Tibial artery (tissue), 4 donors: ENCODE measurements at regions of chr19 and their contacts with region 1.

Region 1: GRCh38 chr19:16382775-16383543 is 58.3 kb downstream of the KLF2 start:
- DNase-seq: peak; percentile 86 to 93
- H3K4me3 ChIP-seq: peak overlapping the region; percentile 3 to 17
- H3K27ac ChIP-seq: peak overlapping the region; percentile 82 to 86
- H3K4me1 ChIP-seq: peaks cover 19 to 31% (median 24%) of the 10 kb centered on the region in 4 donors
- H3K27me3 ChIP-seq: no peaks in the 10 kb centered on the region
- CTCF ChIP-seq: peak; percentile 82 to 92

Region 2: GRCh38 chr19:16247353-16248182 is 135.4 kb before region 1 on chr19:
- intact Hi-C with region 1: loop called (anchors 2 kb)
- DNase-seq: peak; percentile 85 to 89
- H3K4me3 ChIP-seq: no peak overlapping the region
- H3K27ac ChIP-seq: no peak overlapping the region
- H3K4me1 ChIP-seq: peaks cover 0 to 8% (median 2%) of the 10 kb centered on the region in 4 donors
- H3K27me3 ChIP-seq: no peaks in the 10 kb centered on the region
- CTCF ChIP-seq: peak; percentile 86 to 99